Colonic mucosa (tissue), 4 donors: ENCODE measurements at regions of chr22 and their contacts with region 1.

Region 1: GRCh38 chr22:44080936-44081861 is 57.1 kb downstream of the PARVB start:
- DNase-seq: peak; percentile 66
- H3K4me3 ChIP-seq: no peak overlapping the region
- H3K27ac ChIP-seq: no peak overlapping the region
- H3K4me1 ChIP-seq: no peaks in the 10 kb centered on the region
- H3K27me3 ChIP-seq: no peaks in the 10 kb centered on the region
- CTCF ChIP-seq: peak; percentile 92

Region 2: DNA sequence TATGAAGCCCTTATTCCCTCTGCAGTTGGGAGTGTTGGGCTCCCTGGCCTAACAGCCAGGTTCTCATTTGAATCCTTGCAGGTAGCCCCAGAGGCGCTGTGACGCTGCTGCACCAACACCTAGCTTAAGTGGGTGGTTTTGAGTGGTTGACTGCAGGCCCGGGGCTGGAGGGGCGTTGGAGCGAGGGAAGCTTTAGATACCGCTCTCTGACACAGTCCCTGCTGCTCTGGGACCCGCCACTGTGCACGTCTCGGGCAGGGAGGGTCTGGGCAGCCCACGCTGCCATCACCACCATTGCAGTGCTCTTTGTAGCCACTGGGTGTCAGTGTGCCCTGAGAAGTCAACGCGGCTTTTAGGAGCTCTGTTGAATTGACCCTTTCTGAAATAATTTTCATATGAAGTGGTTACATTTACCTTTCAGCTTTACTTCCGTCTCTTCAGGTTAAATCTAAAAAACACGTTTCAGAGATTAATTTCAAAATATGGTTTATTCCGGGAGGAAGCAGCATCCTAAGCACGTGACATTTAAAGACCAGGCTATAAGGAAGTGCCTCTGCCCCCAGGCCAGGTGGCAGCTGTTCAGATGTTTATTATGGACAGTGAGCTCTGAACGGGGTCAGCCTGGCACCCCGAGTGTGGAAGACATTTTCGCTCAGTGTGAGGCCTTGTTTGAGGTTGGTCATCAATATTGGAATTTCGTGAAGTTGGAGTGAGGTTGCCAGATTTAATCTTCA is 88.0 kb before region 1 on chr22:
- intact Hi-C with region 1: loop called (anchors 5 kb)
- DNase-seq: peak; percentile 40
- H3K4me3 ChIP-seq: no peak overlapping the region
- H3K27ac ChIP-seq: no peak overlapping the region
- H3K4me1 ChIP-seq: no peaks in the 10 kb centered on the region
- H3K27me3 ChIP-seq: no peaks in the 10 kb centered on the region
- CTCF ChIP-seq: peak; percentile 95

Region 3: DNA sequence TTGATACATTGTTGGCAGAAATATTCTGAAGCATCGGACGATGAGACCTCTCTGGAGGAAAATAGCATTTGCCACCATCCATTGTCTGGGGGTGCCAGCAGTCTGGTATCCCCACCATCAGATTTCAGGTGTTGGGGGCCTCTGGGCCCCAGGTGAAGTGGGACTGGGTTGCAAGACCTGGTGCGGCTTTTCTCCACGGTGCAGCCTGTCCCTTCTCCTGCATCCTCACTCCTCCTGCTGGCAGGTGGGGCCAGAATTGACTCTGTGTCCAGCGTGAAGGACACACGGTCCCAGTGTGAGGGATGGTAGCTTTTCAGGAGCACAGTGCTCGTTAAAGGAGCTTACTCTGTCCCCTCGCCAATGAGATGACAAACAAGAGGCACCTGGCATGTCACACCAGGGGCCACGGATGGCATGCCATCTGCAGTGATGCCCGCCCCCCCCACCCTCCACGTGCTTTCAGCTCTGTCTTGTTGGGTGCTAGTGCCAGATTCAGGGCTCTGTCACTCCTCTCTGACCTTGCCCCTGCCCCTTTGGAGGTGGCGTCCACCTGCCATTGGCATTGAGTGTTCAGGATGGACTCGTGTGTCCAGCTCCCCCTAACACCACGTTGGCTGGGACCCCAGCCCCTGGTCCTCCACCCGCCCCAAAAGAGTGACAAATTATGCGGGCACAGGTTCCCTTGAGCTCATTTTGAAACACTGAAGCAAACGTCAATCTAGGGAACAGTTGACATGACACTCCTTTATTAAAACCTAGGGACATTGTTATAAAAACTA is 161.9 kb after region 1 on chr22:
- intact Hi-C with region 1: no loop called
- DNase-seq: no peak
- H3K4me3 ChIP-seq: no peak overlapping the region
- H3K27ac ChIP-seq: no peak overlapping the region
- H3K4me1 ChIP-seq: no peaks in the 10 kb centered on the region
- H3K27me3 ChIP-seq: no peaks in the 10 kb centered on the region
- CTCF ChIP-seq: no peak

Region 4: DNA sequence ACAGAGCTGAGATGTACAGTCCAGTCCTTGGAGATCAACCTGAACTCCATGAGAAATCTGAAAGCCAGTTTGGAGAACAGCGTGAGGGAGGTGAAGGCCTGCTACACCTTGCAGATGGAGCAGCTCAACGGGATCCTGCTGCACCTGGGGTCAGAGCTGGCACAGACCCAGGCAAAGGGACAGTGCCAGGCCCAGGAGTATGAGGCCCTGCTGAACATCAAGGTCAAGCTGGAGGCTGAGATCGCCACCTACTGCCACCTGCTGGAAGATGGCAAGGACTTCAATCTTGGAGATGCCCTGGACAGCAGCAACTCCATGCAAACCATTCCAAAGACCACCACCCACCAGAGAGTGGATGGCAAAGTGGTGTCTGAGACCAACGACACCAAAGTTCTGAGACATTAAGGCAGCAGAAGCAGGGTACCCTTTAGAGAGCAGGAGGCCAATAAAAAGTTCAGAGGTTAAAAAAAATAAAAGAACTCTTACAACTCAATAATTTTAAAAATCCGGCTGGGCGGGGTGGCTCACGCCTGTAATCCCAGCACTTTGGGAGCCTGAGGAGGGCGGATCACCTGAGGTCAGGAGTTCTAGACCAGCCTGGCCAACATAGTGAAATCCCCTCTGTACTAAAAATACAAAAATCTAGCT is 486.8 kb after region 1 on chr22:
- intact Hi-C with region 1: loop called (anchors 5 kb)
- DNase-seq: peak; percentile 42
- H3K4me3 ChIP-seq: no peak overlapping the region
- H3K27ac ChIP-seq: no peak overlapping the region
- H3K4me1 ChIP-seq: no peaks in the 10 kb centered on the region
- H3K27me3 ChIP-seq: no peaks in the 10 kb centered on the region
- CTCF ChIP-seq: peak; percentile 58

Region 5: DNA sequence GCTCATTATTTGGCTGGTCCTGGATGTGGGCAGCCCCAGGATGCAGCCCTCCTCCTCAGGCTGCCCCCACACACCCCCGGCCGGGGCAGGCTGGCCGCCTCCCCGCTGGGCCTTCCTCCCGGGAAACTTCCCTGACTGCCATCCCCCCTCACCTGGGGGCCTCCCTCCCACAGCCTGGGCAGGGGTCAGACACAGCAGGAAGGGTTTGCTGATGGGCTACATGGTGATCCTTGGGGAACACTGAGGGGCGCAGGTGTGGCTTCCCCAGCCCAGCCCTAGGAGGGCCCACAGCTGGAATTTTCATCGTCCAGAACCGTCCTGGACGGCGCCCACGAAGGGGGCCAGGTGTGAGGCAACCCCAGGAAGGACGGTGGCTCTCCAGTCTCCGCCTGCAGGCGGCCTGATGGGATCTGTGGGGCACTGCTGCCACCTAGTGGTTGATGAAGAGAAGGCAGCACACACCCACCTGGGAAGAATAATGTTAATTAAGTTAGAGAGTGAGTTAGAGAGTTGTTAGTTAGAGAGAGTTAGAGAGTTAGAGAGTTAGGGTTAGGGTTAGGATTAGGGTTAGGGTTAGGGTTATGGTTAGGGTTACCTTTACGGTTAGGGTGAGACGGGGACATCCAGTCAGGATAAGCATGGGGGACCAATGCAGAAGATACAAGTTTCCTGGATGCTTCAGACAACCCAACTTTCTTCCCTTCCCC is 544.9 kb after region 1 on chr22:
- intact Hi-C with region 1: loop called (anchors 1 kb)
- DNase-seq: peak; percentile 71
- H3K4me3 ChIP-seq: no peak overlapping the region
- H3K27ac ChIP-seq: no peak overlapping the region
- H3K4me1 ChIP-seq: no peaks in the 10 kb centered on the region
- H3K27me3 ChIP-seq: no peaks in the 10 kb centered on the region
- CTCF ChIP-seq: peak; percentile 92